ENCODE measurements at regions of chrX and their contacts with region 1.

Region 1: DNA sequence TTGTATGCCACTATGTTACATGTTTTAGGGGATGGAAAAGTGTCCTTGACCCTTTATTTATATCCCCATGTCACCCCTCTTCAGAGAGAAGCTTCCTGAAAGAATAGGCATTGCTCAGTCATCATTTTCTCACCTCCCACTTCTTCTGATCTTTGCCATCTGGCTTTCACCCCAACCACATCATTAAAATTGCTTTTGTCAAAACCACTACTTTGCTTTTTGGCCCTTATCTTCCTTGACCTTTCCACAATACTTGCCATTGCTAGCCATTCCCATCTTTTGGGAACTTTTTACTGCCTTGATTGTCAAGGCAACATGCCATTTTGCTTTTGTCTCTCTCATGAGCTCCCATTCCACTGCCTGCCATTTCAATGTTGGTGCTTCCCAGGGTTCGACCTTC is 14.9 kb upstream of the FAM9B start:
- DNase-seq: no peak
- ATAC-seq: no peak
- H3K4me3 ChIP-seq: no peak overlapping the region
- H3K4me3 Mint-ChIP-seq: no peak overlapping the region
- H3K27ac ChIP-seq: no peak overlapping the region
- H3K27ac Mint-ChIP-seq: no peak overlapping the region
- H3K4me1 ChIP-seq: no peaks in the 10 kb centered on the region
- H3K4me1 Mint-ChIP-seq: no peaks in the 10 kb centered on the region
- H3K27me3 ChIP-seq: no peaks in the 10 kb centered on the region
- H3K27me3 Mint-ChIP-seq: no peaks in the 10 kb centered on the region
- CTCF ChIP-seq: no peak

Region 2: DNA sequence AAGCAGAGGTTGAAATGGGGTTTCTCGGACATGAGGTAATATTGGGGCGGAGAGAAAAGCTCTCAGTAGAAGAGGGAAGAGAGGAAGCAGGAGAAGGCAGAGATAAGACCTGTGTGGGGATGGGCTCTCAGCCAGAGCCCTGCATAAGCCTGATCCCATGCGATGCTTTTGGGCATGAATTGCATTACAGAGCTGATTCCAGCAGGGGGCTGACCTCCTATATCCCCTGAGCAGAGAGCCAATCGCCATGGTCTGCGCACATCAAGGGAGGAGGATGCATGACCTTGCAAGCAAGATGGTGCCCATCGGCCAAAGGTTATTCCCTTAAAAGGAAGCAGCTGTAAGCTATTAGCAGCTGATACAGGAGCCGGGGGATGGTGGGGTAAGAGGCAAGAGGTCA is 324.5 kb before region 1 on chrX:
- CTCF ChIA-PET with region 1: no interaction called
- POLR2A ChIA-PET with region 1: no interaction called
- intact Hi-C with region 1: no loop called
- DNase-seq: no peak
- ATAC-seq: no peak
- H3K4me3 ChIP-seq: no peak overlapping the region
- H3K4me3 Mint-ChIP-seq: no peak overlapping the region
- H3K27ac ChIP-seq: no peak overlapping the region
- H3K27ac Mint-ChIP-seq: no peak overlapping the region
- H3K4me1 ChIP-seq: no peaks in the 10 kb centered on the region
- H3K4me1 Mint-ChIP-seq: no peaks in the 10 kb centered on the region
- H3K27me3 ChIP-seq: peaks cover 0 to 14% of the 10 kb centered on the region in 2 experiments
- H3K27me3 Mint-ChIP-seq: peaks cover 31% of the 10 kb centered on the region
- CTCF ChIP-seq: no peak

Region 3: GRCh38 chrX:9302381-9302780 is 253.6 kb after region 1 on chrX:
- CTCF ChIA-PET with region 1: no interaction called
- POLR2A ChIA-PET with region 1: no interaction called
- intact Hi-C with region 1: loop called in 1 of 2 experiments (anchors 10 kb)
- DNase-seq: no peak
- ATAC-seq: no peak
- H3K4me3 ChIP-seq: no peak overlapping the region
- H3K4me3 Mint-ChIP-seq: no peak overlapping the region
- H3K27ac ChIP-seq: no peak overlapping the region
- H3K27ac Mint-ChIP-seq: no peak overlapping the region
- H3K4me1 ChIP-seq: no peaks in the 10 kb centered on the region
- H3K4me1 Mint-ChIP-seq: no peaks in the 10 kb centered on the region
- H3K27me3 ChIP-seq: no peaks in the 10 kb centered on the region
- H3K27me3 Mint-ChIP-seq: no peaks in the 10 kb centered on the region
- CTCF ChIP-seq: no peak